ENCODE measurements at regions of chr9 and their contacts with region 1.

Region 1: DNA sequence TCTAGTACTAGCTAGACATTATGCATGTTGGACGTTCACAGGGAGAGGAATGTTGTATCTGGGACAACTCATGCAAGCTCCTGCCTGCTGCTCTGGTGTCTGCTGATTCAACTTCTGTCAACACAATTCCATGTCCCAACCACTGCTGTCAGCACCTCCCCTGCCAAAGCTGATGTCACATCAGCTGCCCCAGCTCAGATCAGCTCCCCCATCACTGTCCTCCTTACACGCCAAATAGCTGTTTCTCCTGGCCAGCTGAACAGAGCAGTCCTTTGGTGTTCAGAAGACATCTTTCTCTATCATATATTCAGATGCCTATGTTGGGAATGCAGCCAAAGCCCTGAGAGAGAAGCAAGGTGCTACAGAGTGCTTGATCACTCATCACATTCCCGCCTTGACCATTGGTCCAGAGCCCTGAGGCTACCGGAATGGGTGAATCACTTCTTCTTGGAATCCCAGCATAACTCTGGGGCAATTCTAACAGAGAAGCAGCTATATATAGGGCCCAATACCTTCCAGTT is 223.3 kb downstream of the SEC61B start:
- DNase-seq: peak; percentile 72 to 88
- ATAC-seq: peak; percentile 98 to 99
- H3K4me3 ChIP-seq: no peak overlapping the region
- H3K27ac ChIP-seq: peak overlapping the region; percentile 60 to 89 (median 76)
- H3K4me1 ChIP-seq: peaks cover 16 to 19% of the 10 kb centered on the region in 2 donors
- H3K27me3 ChIP-seq: no peaks in the 10 kb centered on the region
- CTCF ChIP-seq: no peak
- POLR2A ChIP-seq: peak in 1 of 2 donors; percentile 39

Region 2: DNA sequence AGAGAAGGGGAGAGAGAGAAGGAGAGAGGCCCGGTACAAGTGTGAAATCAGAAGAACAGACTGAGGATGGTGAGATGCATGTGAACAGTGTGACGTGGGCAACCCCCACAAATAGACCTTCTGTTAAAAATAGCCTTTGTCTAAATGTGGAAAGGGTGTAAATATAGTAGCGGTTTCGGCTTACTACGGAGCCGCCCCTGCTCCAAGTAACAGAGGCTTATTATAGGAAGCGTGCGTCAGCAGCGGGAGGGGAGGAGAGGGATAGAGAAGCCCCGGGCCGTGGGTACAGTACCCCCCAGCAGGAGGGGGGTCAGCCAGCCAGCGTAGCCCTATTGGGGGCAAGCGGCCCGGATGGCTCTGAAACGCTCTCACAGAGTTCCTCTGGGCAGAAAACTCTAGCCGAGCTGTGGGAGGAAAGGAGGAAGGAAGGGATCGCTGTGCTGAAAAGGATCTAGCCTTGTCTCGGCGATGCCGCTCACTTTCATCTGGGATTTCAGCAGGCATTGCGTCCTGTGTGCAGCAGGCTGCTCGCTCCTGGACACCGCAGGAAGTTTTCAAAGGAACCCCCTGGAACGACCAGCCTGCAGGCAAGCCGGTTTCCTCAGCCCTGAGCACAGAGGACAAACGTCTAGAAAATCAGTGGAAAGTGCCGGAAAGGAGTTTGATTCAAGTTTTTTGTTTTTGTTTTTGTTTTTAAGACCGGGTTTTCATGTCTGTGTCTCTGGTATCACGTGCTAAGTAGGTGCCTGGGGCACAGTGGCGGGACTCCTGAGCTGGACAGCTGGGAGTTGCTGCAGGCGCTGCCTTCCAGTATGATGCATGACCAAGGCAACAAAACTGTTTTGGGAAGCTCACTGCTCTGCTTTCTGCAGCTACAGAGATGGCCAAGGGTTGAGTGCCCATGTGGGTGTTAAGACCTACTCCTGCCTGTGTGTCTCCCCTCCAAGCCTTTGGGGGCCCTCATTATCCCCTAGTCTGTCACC is 76.8 kb before region 1 on chr9:
- in situ Hi-C with region 1: no loop called
- intact Hi-C with region 1: loop called (anchors 2 kb)
- DNase-seq: peak; percentile 79 to 93
- ATAC-seq: peak; percentile 85 to 92
- H3K4me3 ChIP-seq: peak overlapping the region; percentile 53 to 70 (median 60)
- H3K27ac ChIP-seq: peak overlapping the region; percentile 92 to 99 (median 96)
- H3K4me1 ChIP-seq: peaks cover 37 to 48% of the 10 kb centered on the region in 2 donors
- H3K27me3 ChIP-seq: no peaks in the 10 kb centered on the region
- CTCF ChIP-seq: no peak
- POLR2A ChIP-seq: peak; percentile 92 to 93